ENCODE measurements at regions of chr2 and their contacts with region 1.

Region 1: GRCh38 chr2:230525682-230526081 is 109.7 kb downstream of the SP100 start:
- DNase-seq: no peak
- ATAC-seq: no peak
- H3K4me3 ChIP-seq: no peak overlapping the region
- H3K27ac ChIP-seq: no peak overlapping the region
- H3K4me1 ChIP-seq: no peaks in the 10 kb centered on the region; the same call in 1 of the 2 replicates
- H3K27me3 ChIP-seq: no peaks in the 10 kb centered on the region
- CTCF ChIP-seq: no peak
- EP300 ChIP-seq: no peak
- POLR2A ChIP-seq: no peak
- RAD21 ChIP-seq: no peak

Region 2: GRCh38 chr2:230218421-230218820 is 307.3 kb before region 1 on chr2:
- CTCF ChIA-PET with region 1: no interaction called
- POLR2A ChIA-PET with region 1: no interaction called
- RAD21 ChIA-PET with region 1: no interaction called
- SMC1A ChIA-PET with region 1: no interaction called
- in situ Hi-C with region 1: no loop called
- intact Hi-C with region 1: no loop called
- DNase-seq: no peak
- ATAC-seq: peak; percentile 63
- H3K4me3 ChIP-seq: peak overlapping the region; percentile 82
- H3K27ac ChIP-seq: peak overlapping the region; percentile 95
- H3K4me1 ChIP-seq: peaks cover 26% of the 10 kb centered on the region
- H3K27me3 ChIP-seq: no peaks in the 10 kb centered on the region
- CTCF ChIP-seq: no peak
- EP300 ChIP-seq: no peak
- POLR2A ChIP-seq: no peak
- RAD21 ChIP-seq: no peak

Region 3: GRCh38 chr2:230492101-230492500 is 33.6 kb before region 1 on chr2:
- CTCF ChIA-PET with region 1: no interaction called
- POLR2A ChIA-PET with region 1: no interaction called
- RAD21 ChIA-PET with region 1: no interaction called
- SMC1A ChIA-PET with region 1: no interaction called
- in situ Hi-C with region 1: no loop called
- intact Hi-C with region 1: no loop called
- DNase-seq: no peak
- ATAC-seq: no peak
- H3K4me3 ChIP-seq: no peak overlapping the region
- H3K27ac ChIP-seq: no peak overlapping the region
- H3K4me1 ChIP-seq: peaks cover 10% of the 10 kb centered on the region; the same call in 1 of the 2 replicates
- H3K27me3 ChIP-seq: no peaks in the 10 kb centered on the region
- CTCF ChIP-seq: no peak
- EP300 ChIP-seq: no peak
- POLR2A ChIP-seq: no peak
- RAD21 ChIP-seq: no peak

Region 4: DNA sequence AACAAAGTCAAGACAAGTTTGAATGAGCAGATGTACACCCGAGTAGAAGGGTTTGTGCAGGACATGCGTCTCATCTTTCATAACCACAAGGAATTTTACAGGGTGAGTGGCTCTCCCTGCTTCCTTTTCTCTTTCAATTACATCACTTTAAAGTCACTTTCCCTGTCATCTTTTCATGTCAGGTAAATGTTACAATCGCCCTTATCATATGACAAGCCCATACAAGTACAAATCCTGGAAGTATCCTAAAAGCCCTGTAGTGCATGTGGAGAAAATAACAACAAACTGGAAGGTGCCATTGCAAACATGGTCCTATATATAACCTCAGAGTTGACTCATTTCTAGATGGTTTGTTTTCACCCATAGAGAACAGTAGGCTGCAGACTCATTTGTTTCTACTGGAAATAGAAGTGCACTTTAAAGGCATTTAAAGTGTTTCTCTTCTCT is 16.3 kb after region 1 on chr2:
- CTCF ChIA-PET with region 1: no interaction called
- POLR2A ChIA-PET with region 1: no interaction called
- RAD21 ChIA-PET with region 1: no interaction called
- SMC1A ChIA-PET with region 1: no interaction called
- in situ Hi-C with region 1: no loop called
- intact Hi-C with region 1: no loop called
- DNase-seq: peak; percentile 54
- ATAC-seq: peak; percentile 76
- H3K4me3 ChIP-seq: peak overlapping the region; percentile 21; the same call in 1 of the 2 replicates
- H3K27ac ChIP-seq: peak overlapping the region; percentile 41; the same call in 1 of the 2 replicates
- H3K4me1 ChIP-seq: peaks cover 53% of the 10 kb centered on the region
- H3K27me3 ChIP-seq: no peaks in the 10 kb centered on the region
- CTCF ChIP-seq: no peak
- EP300 ChIP-seq: peak; percentile 25 to 47; a peak in 2 of 4 replicates
- POLR2A ChIP-seq: no peak
- RAD21 ChIP-seq: 0 out of 2 replicates have a peak, but pooled peaks have one; percentile 4

Region 5: GRCh38 chr2:230552181-230552580 is 26.5 kb after region 1 on chr2:
- CTCF ChIA-PET with region 1: no interaction called
- POLR2A ChIA-PET with region 1: interaction called, 10 read pairs
- RAD21 ChIA-PET with region 1: no interaction called
- SMC1A ChIA-PET with region 1: no interaction called
- in situ Hi-C with region 1: no loop called
- intact Hi-C with region 1: no loop called
- DNase-seq: no peak
- ATAC-seq: peak; percentile 65
- H3K4me3 ChIP-seq: no peak overlapping the region
- H3K27ac ChIP-seq: no peak overlapping the region
- H3K4me1 ChIP-seq: no peaks in the 10 kb centered on the region
- H3K27me3 ChIP-seq: no peaks in the 10 kb centered on the region
- CTCF ChIP-seq: no peak
- EP300 ChIP-seq: no peak
- POLR2A ChIP-seq: no peak
- RAD21 ChIP-seq: no peak